Activated T-helper 2 cell treated with anti-CD3 and anti-CD28 coated beads, Interferon-gamma antibody, Interleukin-2, Interleukin-4, amounts not matched to agents 10 μg/mL and 5 μg/mL and 100 μg/mL, durations not matched to agents 14 hours and 24 hours and 36 hours (primary cell): ENCODE measurements at regions of chr22 and their contacts with region 1.

Region 1: GRCh38 chr22:35648066-35649025 is at the start of gene APOL6:
- DNase-seq: peak; percentile 69
- H3K4me3 Mint-ChIP-seq: peak within 1 kb of the TSS; percentile 99
- H3K27ac Mint-ChIP-seq: peak within 1 kb of the TSS; percentile 100
- H3K4me1 Mint-ChIP-seq: peaks cover 21% of the 10 kb centered on the region
- H3K27me3 Mint-ChIP-seq: no peaks in the 10 kb centered on the region
- total RNA-seq, gene APOL6: 21.2 and 21.9 TPM in 2 replicates

Region 2: DNA sequence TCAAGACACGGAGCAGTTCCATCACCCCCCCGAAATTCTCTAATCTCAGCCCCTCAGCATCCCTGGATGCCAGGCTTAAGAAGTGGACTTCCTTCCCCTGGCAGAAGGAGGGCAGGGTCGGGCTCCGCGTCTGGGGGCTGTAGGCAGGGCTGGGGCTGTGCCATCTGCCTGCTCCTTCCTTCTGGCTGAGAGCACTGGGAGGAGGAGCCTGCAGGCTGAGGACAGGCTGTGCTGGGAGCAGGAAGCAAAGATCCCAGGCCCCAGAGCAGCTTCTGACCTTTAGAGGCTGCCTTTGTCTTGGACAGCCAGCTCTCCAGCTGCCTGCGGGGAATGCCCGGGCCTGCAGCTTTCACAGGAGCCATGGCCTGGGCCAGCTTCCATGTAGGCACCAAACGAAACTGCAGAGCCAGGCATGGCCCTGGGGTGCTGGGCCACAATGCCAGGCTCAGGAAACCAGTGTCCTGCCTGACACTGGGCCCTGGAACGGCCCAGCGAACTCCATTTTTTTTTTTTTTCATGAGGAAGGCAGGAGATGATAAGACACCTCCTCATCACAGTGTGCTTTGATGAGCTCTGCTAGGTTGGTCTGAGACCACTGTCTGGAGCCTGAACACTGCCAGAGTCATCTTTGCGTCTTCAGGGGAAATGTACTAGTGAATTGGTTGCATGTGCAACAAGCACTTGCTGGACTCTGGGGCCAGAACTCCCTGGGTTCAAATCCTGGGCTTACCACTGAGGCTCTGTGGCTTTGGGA is 180.5 kb before region 1 on chr22:
- intact Hi-C with region 1: no loop called
- DNase-seq: no peak
- H3K4me3 Mint-ChIP-seq: no peak overlapping the region
- H3K27ac Mint-ChIP-seq: no peak overlapping the region
- H3K4me1 Mint-ChIP-seq: no peaks in the 10 kb centered on the region
- H3K27me3 Mint-ChIP-seq: no peaks in the 10 kb centered on the region

Region 3: DNA sequence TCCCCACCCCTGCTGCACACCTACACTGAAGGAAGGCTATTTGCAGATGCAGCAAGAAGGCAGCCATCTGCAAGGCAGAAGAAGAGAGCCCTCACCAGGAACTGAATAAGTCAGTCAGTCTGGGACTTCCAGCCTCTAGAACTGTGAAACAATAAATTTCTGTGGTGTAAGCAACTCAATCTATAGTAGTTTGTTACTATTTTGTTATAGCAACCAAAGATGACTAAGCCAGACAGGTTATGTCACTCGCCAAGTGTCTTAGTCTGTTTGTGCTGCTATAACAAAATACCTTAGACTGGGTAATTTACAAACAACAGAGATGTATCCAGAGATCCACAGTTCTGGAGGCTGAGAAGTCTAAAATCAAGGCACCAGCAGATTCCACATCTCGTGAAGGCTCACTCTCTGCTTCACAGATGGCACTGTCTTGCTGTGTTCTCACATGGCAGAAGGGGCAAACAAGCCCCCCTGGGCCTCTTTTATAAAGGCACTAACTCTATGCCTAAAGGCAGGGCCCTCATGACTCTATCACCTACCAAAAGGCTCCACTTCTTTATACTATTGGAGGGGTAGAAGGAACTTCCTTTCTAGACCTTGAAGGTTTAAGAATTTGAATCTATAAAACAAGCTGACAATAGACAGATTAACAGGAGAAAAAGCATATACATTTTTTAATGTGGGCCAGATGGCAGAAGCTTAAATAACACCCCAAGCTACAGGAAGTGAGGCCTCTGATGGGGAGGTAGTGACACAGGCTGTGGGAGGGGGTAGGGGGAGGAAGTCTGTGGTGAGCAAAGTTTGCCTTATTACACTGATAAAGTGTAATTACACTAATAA is 12.2 kb after region 1 on chr22:
- intact Hi-C with region 1: loop called (anchors 1 kb)
- DNase-seq: no peak
- H3K4me3 Mint-ChIP-seq: no peak overlapping the region
- H3K27ac Mint-ChIP-seq: peak overlapping the region; percentile 90
- H3K4me1 Mint-ChIP-seq: peaks cover 38% of the 10 kb centered on the region
- H3K27me3 Mint-ChIP-seq: no peaks in the 10 kb centered on the region

Region 4: GRCh38 chr22:35678836-35679235 is 30.5 kb after region 1 on chr22:
- intact Hi-C with region 1: loop called (anchors 1 kb)
- DNase-seq: no peak
- H3K4me3 Mint-ChIP-seq: no peak overlapping the region
- H3K27ac Mint-ChIP-seq: peak overlapping the region; percentile 19
- H3K4me1 Mint-ChIP-seq: peaks cover 15% of the 10 kb centered on the region
- H3K27me3 Mint-ChIP-seq: peaks cover 5% of the 10 kb centered on the region

Region 5: GRCh38 chr22:35690001-35690400 is 41.7 kb after region 1 on chr22:
- intact Hi-C with region 1: loop called (anchors 5 kb)
- DNase-seq: no peak
- H3K4me3 Mint-ChIP-seq: no peak overlapping the region
- H3K27ac Mint-ChIP-seq: no peak overlapping the region
- H3K4me1 Mint-ChIP-seq: no peaks in the 10 kb centered on the region
- H3K27me3 Mint-ChIP-seq: no peaks in the 10 kb centered on the region